Tibial artery (tissue), 4 donors: ENCODE measurements at regions of chr5 and their contacts with region 1.

Region 1: GRCh38 chr5:115573133-115573532 is 28.6 kb upstream of the FEM1C start:
- DNase-seq: no peak
- H3K4me3 ChIP-seq: no peak overlapping the region
- H3K27ac ChIP-seq: no peak overlapping the region
- H3K4me1 ChIP-seq: no peaks in the 10 kb centered on the region
- H3K27me3 ChIP-seq: no peaks in the 10 kb centered on the region
- CTCF ChIP-seq: no peak

Region 2: DNA sequence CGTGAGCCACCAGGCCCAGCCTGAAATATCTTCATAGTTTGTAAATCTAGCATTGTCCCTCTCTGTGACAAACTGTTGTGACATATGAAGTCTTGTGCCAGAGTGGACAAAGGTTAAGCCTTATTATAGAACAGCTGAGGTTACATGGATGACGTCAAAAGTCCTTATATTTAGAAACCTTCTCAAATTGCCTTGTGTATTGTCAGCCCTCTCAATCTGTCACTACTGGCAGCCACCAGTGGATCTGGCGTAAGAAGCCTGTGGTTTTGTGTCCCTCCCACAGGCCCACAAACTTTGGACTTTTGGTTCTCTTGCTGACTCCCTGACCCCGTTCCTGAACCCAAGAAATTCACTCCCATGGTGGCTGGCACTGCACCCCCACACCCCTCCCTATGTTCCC is 197.2 kb before region 1 on chr5:
- intact Hi-C with region 1: loop called (anchors 2 kb)
- DNase-seq: no peak
- H3K4me3 ChIP-seq: no peak overlapping the region
- H3K27ac ChIP-seq: no peak overlapping the region
- H3K4me1 ChIP-seq: peaks cover 0 to 20% (median 5%) of the 10 kb centered on the region in 4 donors
- H3K27me3 ChIP-seq: no peaks in the 10 kb centered on the region
- CTCF ChIP-seq: no peak

Region 3: DNA sequence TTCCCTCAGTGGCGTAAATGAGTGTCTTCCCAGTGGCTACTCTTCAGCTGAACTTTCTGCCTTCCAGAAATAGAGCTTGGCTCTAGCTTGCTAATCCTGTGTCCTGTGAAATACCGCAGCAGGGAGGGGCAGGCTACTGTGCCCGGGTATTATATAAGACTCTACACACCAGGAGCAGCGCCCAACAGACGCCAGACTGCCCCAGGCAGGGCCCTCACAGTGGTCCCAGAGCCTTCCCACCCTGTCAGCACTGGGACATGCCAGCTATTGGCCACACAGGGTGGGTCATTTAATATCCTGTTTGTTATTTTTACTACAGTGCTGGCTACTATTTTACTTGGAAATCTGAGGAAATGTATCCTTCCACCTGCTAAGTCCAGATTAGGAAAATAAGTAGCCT is 149.6 kb before region 1 on chr5:
- intact Hi-C with region 1: no loop called
- DNase-seq: peak; percentile 64 to 78
- H3K4me3 ChIP-seq: no peak overlapping the region
- H3K27ac ChIP-seq: peak overlapping the region; percentile 53
- H3K4me1 ChIP-seq: peaks cover 0 to 73% (median 30%) of the 10 kb centered on the region in 4 donors
- H3K27me3 ChIP-seq: no peaks in the 10 kb centered on the region
- CTCF ChIP-seq: no peak

Region 4: DNA sequence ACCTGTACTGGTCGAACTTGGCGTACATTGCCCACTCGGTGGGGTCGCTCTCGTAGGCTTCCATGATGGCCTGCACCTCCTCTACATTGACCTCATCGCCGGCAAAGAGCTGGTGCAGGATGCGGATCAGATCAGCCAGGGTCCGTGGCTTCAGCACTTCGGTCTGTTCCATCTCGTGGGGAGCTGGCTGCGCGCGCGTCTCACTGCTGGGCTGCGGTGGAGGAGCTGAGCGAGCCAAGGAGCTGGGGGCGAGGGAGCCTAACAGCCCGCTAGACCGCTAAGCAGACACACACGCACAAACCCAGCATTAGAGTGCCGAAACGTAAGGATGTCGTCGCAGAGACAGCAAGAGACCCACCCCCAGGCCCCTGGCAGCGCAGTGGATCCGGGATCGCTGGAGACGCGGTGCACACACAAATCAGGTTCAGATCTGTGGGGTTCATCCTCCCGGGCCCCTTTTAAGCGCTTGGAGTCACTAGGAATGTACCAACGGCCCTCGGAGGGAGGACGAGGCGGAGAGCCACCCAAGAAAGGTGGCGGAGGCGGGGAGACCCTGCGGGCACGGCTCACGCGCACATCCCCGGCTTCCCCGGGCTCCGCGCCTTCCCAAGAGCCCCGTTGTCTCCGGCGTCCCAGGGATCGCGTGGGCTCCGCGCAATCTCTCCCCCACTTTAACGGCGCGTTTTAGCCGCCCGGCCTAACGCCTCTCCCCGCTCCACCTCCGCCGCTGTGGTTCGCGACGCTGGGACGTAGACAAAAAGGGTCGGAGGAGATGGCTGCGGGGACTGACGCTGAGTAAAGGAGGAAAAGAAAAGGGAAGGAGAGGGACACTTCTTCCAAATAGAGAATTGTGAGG is 243.3 kb after region 1 on chr5 and contains the start of gene CDO1:
- intact Hi-C with region 1: no loop called
- DNase-seq: peak; percentile 74
- H3K4me3 ChIP-seq: peak within 1 kb of the TSS; percentile 51 to 59
- H3K27ac ChIP-seq: peak within 1 kb of the TSS; percentile 53 to 72
- H3K4me1 ChIP-seq: peaks cover 0 to 19% (median 11%) of the 10 kb centered on the region in 4 donors
- H3K27me3 ChIP-seq: peaks cover 0 to 30% of the 10 kb centered on the region in 2 donors
- CTCF ChIP-seq: no peak